PC-9 (cell line): ENCODE measurements at regions of chr17 and their contacts with region 1.

Region 1: DNA sequence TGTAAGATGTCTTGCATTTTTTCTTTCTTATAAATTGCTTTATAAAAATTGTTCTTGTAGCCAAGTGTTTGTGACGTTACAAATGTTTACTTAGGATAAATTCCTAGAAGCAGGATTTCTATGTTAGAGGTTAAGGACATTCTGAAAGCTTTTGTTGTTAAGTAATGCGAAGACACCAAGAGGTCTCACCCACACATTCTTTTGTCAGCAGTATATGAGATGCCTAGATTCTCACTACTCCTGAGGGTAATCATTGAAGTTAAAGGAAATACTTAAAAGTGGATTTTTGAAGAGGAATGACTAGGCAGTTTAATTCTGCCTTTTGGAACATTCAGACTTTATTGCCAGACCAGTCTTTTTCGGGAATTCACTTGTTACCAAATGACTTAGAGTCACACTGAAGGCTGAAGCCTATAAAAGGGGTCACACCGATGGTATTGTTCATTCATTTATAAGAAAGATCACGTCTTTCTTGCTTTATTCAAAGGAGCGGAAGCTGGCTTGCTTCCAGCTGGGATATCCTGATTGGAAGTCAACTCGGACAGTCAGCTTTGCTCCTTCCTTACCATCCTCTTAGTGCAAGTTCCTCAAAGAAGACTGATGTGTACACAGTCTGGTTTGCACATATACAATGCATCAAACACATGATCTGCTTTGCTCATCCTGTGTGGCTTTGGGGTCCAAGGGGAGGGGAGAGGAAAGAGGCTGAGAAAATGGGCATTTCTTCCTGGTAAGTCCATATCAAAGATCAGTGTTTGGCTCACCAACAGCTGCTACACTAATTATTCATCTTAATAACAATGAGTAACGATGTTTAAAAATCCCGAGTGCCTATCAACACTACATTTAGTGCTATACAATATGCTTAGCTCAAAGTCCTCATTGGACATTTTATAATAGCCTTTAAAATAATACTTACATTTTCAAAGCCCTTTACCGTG is 160.0 kb downstream of the MAP2K6 start:
- DNase-seq: no peak
- H3K4me3 ChIP-seq: no peak overlapping the region
- H3K27ac ChIP-seq: peak overlapping the region; percentile 37; the same call in 1 of the 2 replicates
- H3K4me1 ChIP-seq: peaks cover 31% of the 10 kb centered on the region
- H3K27me3 ChIP-seq: no peaks in the 10 kb centered on the region
- CTCF ChIP-seq: no peak

Region 2: DNA sequence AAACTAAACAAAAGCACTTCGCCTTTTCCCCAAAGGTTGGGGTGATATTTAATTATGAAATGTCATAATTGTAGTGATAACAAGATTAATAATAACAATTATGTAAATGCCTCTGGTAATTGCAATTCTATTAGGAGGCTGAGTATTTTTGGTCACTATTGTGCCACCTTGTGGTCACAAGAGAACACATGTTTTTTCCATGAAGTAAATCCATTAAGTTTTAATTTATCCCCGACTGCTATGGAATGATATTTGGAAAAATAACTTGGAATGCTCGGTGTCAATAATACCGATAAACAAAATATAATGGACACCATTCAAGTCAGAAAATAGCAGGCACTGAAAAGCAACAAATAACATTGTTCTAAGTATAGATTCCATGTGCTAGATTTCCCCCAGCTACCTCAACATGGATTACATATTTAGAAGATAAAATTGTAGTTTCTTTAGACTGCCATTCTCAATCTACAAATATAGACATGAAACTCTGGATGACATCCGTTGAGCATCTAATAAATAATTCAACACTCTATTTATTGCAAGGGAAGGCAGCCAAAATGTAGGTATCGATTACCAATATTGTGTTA is 569.8 kb after region 1 on chr17:
- CTCF ChIA-PET with region 1: no interaction called
- POLR2A ChIA-PET with region 1: no interaction called
- intact Hi-C with region 1: loop called (anchors 1 kb)
- DNase-seq: no peak
- H3K4me3 ChIP-seq: no peak overlapping the region
- H3K27ac ChIP-seq: no peak overlapping the region
- H3K4me1 ChIP-seq: no peaks in the 10 kb centered on the region
- H3K27me3 ChIP-seq: no peaks in the 10 kb centered on the region
- CTCF ChIP-seq: peak; percentile 86

Region 3: DNA sequence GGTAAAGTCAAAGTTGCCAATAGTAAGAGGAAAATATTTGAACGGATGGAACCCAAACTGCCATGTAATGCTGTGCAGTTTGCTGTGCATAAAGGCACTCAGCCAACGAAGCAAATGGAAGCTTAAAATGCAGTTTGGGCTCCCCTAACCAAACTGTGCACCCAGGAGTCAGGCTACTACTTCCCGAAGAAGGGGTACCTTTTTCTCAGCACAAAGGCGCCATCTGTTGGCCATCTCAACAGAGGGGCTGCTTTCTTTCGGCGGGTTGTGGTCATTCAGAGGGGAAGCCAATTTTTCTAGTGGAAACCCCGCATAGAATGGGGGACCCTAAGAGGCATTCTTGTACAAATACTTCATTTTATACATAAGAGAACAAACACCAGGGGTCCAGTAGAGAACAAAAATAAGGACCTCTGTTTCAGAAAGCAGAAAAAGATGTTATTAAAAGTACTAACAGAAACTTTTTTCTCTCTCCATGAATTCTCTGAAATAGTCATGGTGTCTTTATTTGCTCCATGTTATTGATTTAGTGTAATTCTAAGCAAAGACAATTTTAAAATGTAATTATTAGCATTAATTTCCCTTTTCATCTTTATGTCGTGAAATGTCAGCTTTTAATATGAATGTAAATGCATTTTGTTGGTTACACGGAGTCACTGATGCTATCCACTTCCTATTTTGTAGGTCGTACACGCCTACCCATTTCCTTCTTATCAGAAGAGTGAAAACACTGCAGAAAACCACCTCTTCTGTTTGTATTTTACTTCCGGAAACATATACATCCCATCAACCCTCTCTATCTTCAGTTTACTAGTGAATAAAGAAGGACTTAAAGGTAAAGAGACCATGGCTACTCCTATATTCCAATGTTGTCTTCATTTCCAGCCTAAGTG is 1048.1 kb after region 1 on chr17:
- CTCF ChIA-PET with region 1: no interaction called
- POLR2A ChIA-PET with region 1: no interaction called
- intact Hi-C with region 1: loop called (anchors 1 kb)
- DNase-seq: peak in 1 of 2 experiments; percentile 39
- H3K4me3 ChIP-seq: no peak overlapping the region
- H3K27ac ChIP-seq: no peak overlapping the region
- H3K4me1 ChIP-seq: no peaks in the 10 kb centered on the region
- H3K27me3 ChIP-seq: no peaks in the 10 kb centered on the region
- CTCF ChIP-seq: peak; percentile 72